ENCODE measurements at regions of chr9 and their contacts with region 1.

Region 1: DNA sequence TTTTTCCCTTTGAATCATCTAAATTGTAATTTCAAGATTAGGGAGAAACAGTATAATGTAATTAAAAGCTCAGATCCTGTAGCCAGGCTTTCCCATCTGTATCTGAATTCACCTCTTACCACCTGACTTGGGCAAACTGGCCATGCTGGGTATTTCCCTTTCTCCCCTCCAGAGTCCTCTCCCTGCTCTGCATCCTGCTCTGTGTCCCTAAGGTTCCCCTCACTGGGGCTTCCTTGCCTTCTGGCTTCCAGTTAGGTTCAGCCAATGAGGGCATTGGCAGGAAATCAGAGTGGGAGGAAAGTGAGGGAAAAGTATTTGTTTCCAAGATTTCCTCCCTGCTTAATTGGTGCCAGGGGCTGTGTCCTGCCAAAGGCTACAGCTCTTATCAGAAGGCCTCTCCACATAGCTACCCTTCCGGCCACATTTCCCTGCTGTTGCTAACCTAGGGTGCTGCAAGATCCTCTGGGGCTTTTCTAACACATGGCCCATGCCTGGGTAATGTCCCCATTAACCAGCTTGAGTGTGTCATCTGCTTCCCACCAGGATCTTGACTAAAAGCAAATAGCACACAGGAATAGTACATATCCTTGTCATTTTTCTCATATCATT is 51.0 kb upstream of the MPDZ start:
- DNase-seq: no peak
- ATAC-seq: no peak
- H3K4me3 ChIP-seq: no peak overlapping the region
- H3K27ac ChIP-seq: no peak overlapping the region
- H3K4me1 ChIP-seq: no peaks in the 10 kb centered on the region
- H3K27me3 ChIP-seq: no peaks in the 10 kb centered on the region; the same call in 1 of the 2 replicates
- CTCF ChIP-seq: no peak
- POLR2A ChIP-seq: no peak
- RAD21 ChIP-seq: no peak

Region 2: GRCh38 chr9:12875216-12875615 is 455.3 kb before region 1 on chr9:
- CTCF ChIA-PET with region 1: no interaction called
- POLR2A ChIA-PET with region 1: no interaction called
- dilution Hi-C with region 1: no loop called
- in situ Hi-C with region 1: no loop called
- intact Hi-C with region 1: no loop called
- DNase-seq: peak; percentile 55
- ATAC-seq: no peak; the same call in 1 of the 2 replicates
- H3K4me3 ChIP-seq: no peak overlapping the region
- H3K27ac ChIP-seq: no peak overlapping the region
- H3K4me1 ChIP-seq: no peaks in the 10 kb centered on the region; the same call in 1 of the 2 replicates
- H3K27me3 ChIP-seq: no peaks in the 10 kb centered on the region
- CTCF ChIP-seq: no peak
- POLR2A ChIP-seq: no peak
- RAD21 ChIP-seq: no peak

Region 3: DNA sequence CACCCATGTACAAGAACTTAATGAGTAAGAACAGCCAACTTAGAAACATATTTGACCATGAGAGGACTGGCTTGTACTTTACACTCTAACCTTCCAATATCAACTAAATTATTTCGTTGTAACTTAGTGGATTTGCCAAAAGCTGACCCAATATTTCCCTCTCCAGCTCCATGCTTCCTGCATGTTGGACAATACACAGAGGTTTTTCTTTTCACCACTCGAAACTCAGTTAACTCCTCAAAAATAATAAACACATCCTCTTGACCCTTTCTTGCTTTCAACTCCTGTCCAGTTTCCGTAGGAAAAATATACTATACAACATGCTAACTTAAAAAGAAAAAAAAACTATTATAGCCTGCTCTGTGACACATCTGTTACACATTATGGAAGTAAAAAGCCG is 239.9 kb before region 1 on chr9:
- CTCF ChIA-PET with region 1: no interaction called
- POLR2A ChIA-PET with region 1: no interaction called
- dilution Hi-C with region 1: no loop called
- in situ Hi-C with region 1: no loop called
- intact Hi-C with region 1: no loop called
- DNase-seq: no peak
- ATAC-seq: no peak
- H3K4me3 ChIP-seq: no peak overlapping the region
- H3K27ac ChIP-seq: no peak overlapping the region
- H3K4me1 ChIP-seq: no peaks in the 10 kb centered on the region
- H3K27me3 ChIP-seq: no peaks in the 10 kb centered on the region
- CTCF ChIP-seq: no peak
- POLR2A ChIP-seq: no peak
- RAD21 ChIP-seq: no peak

Region 4: GRCh38 chr9:13351778-13352386 is 21.4 kb after region 1 on chr9:
- CTCF ChIA-PET with region 1: no interaction called
- POLR2A ChIA-PET with region 1: no interaction called
- dilution Hi-C with region 1: no loop called
- in situ Hi-C with region 1: no loop called
- intact Hi-C with region 1: loop called (anchors 2 kb)
- DNase-seq: peak; percentile 65
- ATAC-seq: peak; percentile 75
- H3K4me3 ChIP-seq: no peak overlapping the region
- H3K27ac ChIP-seq: no peak overlapping the region
- H3K4me1 ChIP-seq: peaks cover 2% of the 10 kb centered on the region; the same call in 1 of the 2 replicates
- H3K27me3 ChIP-seq: no peaks in the 10 kb centered on the region
- CTCF ChIP-seq: peak; percentile 73
- POLR2A ChIP-seq: no peak
- RAD21 ChIP-seq: peak; percentile 65